Right cardiac atrium (tissue), 5 donors: ENCODE measurements at regions of chr13 and their contacts with region 1.

Region 1: GRCh38 chr13:39684531-39685137 is 29.2 kb downstream of the COG6 start:
- DNase-seq: no peak
- ATAC-seq: no peak
- H3K4me3 ChIP-seq: no peak overlapping the region
- H3K27ac ChIP-seq: no peak overlapping the region
- H3K4me1 ChIP-seq: no peaks in the 10 kb centered on the region
- H3K27me3 ChIP-seq: no peaks in the 10 kb centered on the region

Region 2: DNA sequence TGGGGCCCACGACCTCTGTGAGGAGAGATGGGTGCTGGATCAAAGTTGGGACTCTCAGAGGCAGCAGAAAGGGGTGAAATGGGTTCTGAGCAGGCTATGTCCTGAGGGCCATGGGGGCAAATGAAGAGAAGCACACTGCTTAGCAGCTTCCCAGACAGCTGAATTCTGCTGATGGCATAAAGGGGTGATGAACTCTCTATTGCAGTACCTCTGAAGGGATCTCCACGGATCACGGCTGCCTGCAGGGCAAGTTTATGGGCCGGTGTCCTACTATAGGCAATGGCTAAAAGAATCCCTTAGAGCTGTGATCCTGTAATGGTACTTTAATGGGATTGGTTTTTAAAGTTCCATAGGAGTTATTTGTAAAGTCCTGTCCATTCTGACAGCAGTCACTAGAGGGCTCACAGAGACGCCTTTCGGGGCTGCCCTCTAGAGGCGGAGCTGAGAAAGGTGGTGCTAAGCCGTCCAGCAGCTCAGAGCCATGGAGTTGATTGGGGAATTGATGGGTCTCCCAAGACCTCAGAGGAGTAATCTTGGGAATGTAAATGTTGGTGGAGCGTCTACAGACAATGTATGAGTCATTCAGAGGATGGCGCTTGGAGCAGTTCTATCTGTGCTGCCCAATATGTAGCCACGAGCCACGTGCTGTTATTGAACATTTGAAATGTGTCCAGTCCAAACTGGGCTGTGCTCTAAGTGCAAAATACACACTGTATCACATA is 258.1 kb after region 1 on chr13:
- intact Hi-C with region 1: loop called in 1 of 4 experiments (anchors 10 kb)
- DNase-seq: peak; percentile 74 to 85 (median 81)
- ATAC-seq: peak; percentile 91 to 92
- H3K4me3 ChIP-seq: no peak overlapping the region
- H3K27ac ChIP-seq: no peak overlapping the region
- H3K4me1 ChIP-seq: peaks cover 3% of the 10 kb centered on the region
- H3K27me3 ChIP-seq: no peaks in the 10 kb centered on the region

Region 3: DNA sequence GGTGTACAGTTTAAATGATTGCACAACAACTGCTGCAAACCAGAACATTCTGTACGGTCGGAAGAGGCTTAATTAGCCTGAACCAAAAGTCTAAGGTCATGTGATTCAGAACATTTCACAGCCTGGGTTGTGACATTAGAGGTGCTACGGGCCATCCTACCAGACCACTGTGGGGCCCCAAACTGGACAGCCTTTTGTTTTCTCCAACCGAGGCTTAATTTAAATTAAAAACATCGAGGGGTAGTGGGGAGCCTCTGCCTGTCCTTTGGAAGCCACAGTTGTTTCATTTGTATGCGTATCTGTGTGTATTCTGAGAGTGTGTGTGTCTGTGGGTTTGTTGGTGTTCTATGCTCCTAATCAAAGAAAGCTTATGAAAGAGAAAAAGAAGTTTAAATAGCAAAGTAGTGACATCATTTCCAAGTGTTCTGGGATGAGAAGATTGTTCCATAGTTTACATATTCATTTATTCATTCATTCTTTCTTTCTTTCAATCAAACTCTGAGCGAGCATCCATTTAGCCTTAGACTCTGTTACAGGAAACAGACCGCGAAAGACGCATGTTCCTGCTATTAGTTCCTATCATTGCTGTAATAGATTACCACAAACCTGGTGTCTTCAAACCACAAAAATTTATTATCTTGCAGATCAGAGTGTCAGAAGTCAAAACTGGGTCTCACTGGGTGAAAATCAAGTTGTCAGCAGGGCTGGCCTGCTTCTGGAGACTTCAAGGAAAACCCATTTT is 537.0 kb after region 1 on chr13:
- intact Hi-C with region 1: no loop called
- DNase-seq: peak in 1 of 3 donors; percentile 37
- ATAC-seq: peak; percentile 83 to 90
- H3K4me3 ChIP-seq: no peak overlapping the region
- H3K27ac ChIP-seq: peak overlapping the region; percentile 66
- H3K4me1 ChIP-seq: peaks cover 2% of the 10 kb centered on the region
- H3K27me3 ChIP-seq: no peaks in the 10 kb centered on the region

Region 4: GRCh38 chr13:40777166-40777808 is 1092.7 kb after region 1 on chr13:
- intact Hi-C with region 1: loop called in 1 of 4 experiments (anchors 5 kb)
- DNase-seq: no peak
- ATAC-seq: peak; percentile 83 to 84
- H3K4me3 ChIP-seq: peak overlapping the region; percentile 41
- H3K27ac ChIP-seq: no peak overlapping the region
- H3K4me1 ChIP-seq: no peaks in the 10 kb centered on the region
- H3K27me3 ChIP-seq: no peaks in the 10 kb centered on the region